ENCODE measurements at regions of chr11 and their contacts with region 1.

Region 1: GRCh38 chr11:66677599-66678375 is at the start of gene RBM4B:
- DNase-seq: peak; percentile 97
- H3K4me3 Mint-ChIP-seq: peak within 1 kb of the TSS; percentile 93
- H3K27ac Mint-ChIP-seq: peak within 1 kb of the TSS; percentile 96
- H3K4me1 Mint-ChIP-seq: peaks cover 26% of the 10 kb centered on the region
- H3K27me3 Mint-ChIP-seq: no peaks in the 10 kb centered on the region
- total RNA-seq, gene RBM4B: 10.9 to 11.7 TPM

Region 2: GRCh38 chr11:66408488-66409214 is 269.1 kb before region 1 on chr11:
- CTCF ChIA-PET with region 1: interaction called, 23 read pairs
- POLR2A ChIA-PET with region 1: no interaction called
- intact Hi-C with region 1: loop called (anchors 1 kb)
- DNase-seq: peak; percentile 93
- H3K4me3 Mint-ChIP-seq: peak overlapping the region; percentile 67
- H3K27ac Mint-ChIP-seq: no peak overlapping the region
- H3K4me1 Mint-ChIP-seq: peaks cover 4% of the 10 kb centered on the region
- H3K27me3 Mint-ChIP-seq: peaks cover 17% of the 10 kb centered on the region

Region 3: DNA sequence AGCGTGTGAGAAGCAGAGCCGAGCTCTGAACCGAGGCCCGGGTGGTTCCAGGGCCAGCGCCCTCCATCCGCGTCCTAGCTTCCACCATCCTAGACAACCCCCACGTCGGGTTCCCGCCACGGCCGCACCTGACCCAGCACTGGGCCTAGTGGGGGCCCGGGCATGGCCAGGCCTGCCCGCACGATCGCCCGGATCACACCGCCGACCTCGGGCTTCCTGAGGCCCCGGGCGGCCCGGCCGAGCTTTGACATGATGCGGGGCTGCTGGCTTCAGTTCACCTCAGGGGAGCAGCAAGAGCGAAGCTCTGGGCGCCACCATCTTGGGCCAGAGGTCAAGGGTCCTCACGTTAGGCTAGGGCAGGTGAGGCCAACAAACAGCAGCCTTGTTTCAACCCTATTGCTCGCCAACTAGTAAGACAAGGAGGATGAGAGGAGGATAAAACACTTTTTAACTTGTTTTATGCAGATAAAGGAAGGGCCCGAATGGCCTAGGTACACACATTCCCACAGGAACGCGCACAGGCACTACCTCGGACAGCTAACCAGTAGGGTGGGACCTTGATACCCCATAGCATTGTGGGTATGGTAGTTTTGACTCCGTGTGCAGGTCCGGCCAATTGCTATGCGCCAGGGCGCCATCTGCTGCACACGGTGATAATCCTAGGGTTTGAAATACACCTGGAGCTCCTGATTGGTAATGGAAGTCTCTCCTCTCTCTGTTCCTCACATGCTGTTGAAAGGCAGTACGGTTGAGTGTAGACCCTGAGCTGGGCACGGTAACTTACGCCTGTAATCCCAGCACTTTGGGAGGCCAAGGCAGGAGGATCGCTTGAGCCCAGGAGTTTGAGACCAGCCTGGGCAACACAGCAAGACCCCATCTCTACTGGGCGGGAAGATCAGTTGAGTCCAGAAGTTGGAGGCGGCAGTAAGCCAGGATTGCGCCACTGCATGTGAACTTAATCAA is 239.0 kb before region 1 on chr11 and contains the start of gene MRPL11:
- CTCF ChIA-PET with region 1: interaction called, 28 read pairs
- POLR2A ChIA-PET with region 1: interaction called, 8 read pairs
- intact Hi-C with region 1: loop called (anchors 2 kb)
- DNase-seq: peak; percentile 94
- H3K4me3 Mint-ChIP-seq: peak within 1 kb of the TSS; percentile 86
- H3K27ac Mint-ChIP-seq: peak within 1 kb of the TSS; percentile 99
- H3K4me1 Mint-ChIP-seq: peaks cover 13% of the 10 kb centered on the region
- H3K27me3 Mint-ChIP-seq: peaks cover 3% of the 10 kb centered on the region
- total RNA-seq, gene MRPL11: 104 to 106 TPM

Region 4: GRCh38 chr11:66545701-66546367 is 132.0 kb before region 1 on chr11 and contains the start of gene ZDHHC24:
- CTCF ChIA-PET with region 1: interaction called, 44 read pairs
- POLR2A ChIA-PET with region 1: interaction called, 15 read pairs
- intact Hi-C with region 1: loop called (anchors 1 kb)
- DNase-seq: peak; percentile 96
- H3K4me3 Mint-ChIP-seq: peak within 1 kb of the TSS; percentile 80
- H3K27ac Mint-ChIP-seq: peak within 1 kb of the TSS; percentile 74
- H3K4me1 Mint-ChIP-seq: peaks cover 14% of the 10 kb centered on the region
- H3K27me3 Mint-ChIP-seq: no peaks in the 10 kb centered on the region
- total RNA-seq, gene ZDHHC24: 13.5 to 14.9 TPM

Region 5: DNA sequence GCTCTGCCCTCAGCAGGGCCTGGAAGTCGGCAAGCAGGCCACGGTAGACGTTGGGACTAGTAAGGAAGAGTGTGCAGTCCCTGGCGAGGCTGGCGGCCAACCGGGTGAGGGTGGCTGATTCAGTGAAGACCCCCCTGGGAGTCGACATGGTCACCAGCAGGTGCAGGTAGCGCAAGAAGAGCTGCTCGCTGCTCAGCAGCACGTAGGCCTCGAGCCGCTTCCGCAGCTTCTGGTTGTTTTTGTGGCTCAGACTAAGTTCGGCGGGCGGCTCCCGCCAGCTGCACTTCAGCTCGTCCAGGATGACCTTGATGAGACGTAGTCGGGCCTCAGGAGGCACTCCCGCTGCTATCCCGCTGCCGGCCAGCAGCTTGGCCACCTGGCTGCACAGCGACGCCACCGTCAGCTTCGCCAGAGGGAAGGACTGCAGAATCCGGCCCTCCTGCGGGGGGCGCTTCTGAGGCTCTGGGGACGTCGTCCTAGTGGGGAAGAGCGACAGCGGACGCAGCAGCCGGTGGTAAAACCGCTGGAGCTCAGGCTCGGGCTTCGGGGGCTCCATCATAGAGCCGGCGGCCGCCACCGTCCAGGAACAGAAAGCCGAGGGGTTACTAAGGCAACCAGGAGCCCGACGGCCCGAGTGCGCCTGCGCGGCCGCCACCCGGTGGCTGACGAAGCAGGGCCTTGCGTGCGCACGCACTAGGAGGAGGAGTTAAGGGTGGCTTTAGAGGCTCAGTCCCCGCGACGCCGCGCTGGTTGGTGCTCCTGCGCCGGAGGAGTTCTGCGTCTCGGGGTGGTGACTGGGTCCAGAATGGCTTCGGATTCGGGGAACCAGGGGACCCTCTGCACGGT is 85.1 kb before region 1 on chr11 and contains the starts of genes CCDC87 and CCS:
- CTCF ChIA-PET with region 1: interaction called, 21 read pairs
- POLR2A ChIA-PET with region 1: interaction called, 7 read pairs
- intact Hi-C with region 1: loop called (anchors 1 kb)
- DNase-seq: peak; percentile 99
- H3K4me3 Mint-ChIP-seq: peak within 1 kb of the TSS; percentile 100
- H3K27ac Mint-ChIP-seq: peak within 1 kb of the TSS; percentile 90
- H3K4me1 Mint-ChIP-seq: peaks cover 30% of the 10 kb centered on the region
- H3K27me3 Mint-ChIP-seq: no peaks in the 10 kb centered on the region
- total RNA-seq, gene CCDC87: 0.12 to 0.24 TPM
- total RNA-seq, gene CCS: 24.2 to 26.9 TPM

Region 6: DNA sequence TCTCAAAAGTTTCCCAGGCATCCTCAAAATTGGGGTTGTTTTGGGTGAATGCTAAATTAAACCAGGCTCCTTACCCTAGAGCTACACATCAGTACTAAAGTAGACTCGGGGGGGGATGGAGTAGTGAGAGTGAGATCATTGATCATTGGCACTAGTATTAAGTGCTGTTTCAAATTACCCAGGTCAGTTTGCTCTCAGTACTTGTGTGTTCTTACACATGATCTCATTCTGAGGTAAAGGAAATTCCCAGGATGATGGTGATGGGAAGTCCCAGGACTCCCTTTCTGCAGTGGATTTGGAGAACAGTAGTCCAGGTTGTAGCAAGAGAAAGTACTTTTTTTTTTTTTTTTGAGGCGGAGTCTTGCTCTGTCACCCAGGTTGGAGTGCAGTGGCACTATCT is 26.8 kb before region 1 on chr11:
- CTCF ChIA-PET with region 1: interaction called, 12 read pairs
- POLR2A ChIA-PET with region 1: interaction called, 10 read pairs
- intact Hi-C with region 1: no loop called
- DNase-seq: no peak
- H3K4me3 Mint-ChIP-seq: no peak overlapping the region
- H3K27ac Mint-ChIP-seq: peak overlapping the region; percentile 33
- H3K4me1 Mint-ChIP-seq: peaks cover 55% of the 10 kb centered on the region
- H3K27me3 Mint-ChIP-seq: no peaks in the 10 kb centered on the region

Measured in activated CD4-positive, alpha-beta memory T cell treated with anti-CD3 and anti-CD28 coated beads for 36 hours (primary cell).